Activated T-helper 1 cell treated with anti-CD3 and anti-CD28 coated beads, Interleukin-12 subunit alpha, Interleukin-12 subunit beta, Interleukin-2, Interleukin-4 antibody, amounts not matched to agents 30 ng/mL and 10 ng/mL and 1 ng/mL, durations not matched to agents 14 hours and 24 hours and 36 hours (primary cell): ENCODE measurements at regions of chr3 and their contacts with region 1.

Region 1: GRCh38 chr3:195129644-195130492 is 141.1 kb downstream of the XXYLT1 start:
- DNase-seq: no peak
- H3K4me3 Mint-ChIP-seq: peak overlapping the region; percentile 20
- H3K27ac Mint-ChIP-seq: peak overlapping the region; percentile 61
- H3K4me1 Mint-ChIP-seq: peaks cover 31% of the 10 kb centered on the region
- H3K27me3 Mint-ChIP-seq: no peaks in the 10 kb centered on the region

Region 2: GRCh38 chr3:195147649-195148095 is 17.8 kb after region 1 on chr3:
- intact Hi-C with region 1: loop called (anchors 1 kb)
- DNase-seq: peak; percentile 55
- H3K4me3 Mint-ChIP-seq: peak overlapping the region; percentile 82
- H3K27ac Mint-ChIP-seq: peak overlapping the region; percentile 22
- H3K4me1 Mint-ChIP-seq: peaks cover 43% of the 10 kb centered on the region
- H3K27me3 Mint-ChIP-seq: peaks cover 6% of the 10 kb centered on the region

Region 3: DNA sequence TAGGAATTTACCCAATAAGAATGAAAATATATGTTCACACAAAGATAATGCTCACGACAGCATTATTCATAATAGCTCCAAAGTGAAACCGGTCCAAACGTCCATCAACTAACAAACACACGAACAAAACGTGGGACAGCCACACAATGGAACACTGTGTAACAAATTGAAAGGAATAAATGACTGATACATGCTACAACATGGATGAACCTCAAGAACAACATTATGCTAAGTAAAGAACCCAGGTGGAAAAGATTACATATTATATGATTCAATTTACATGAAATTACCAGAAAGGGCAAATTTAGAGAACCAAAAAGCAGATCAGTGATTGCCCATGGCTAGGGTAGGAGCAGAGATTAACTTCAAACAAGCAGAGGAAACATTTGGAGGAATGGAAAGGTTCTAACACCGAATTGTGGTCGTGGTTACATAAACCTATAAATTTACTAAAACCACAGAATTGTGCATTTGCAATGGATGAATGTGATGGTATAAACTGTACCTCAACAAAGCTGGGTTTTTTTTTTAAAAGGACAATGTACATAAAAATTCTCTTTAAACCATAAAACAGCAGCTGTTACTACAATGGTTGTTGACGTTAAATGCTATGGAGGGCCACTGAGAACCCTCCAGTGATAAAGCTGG is 64.8 kb after region 1 on chr3:
- intact Hi-C with region 1: loop called (anchors 1 kb)
- DNase-seq: no peak
- H3K4me3 Mint-ChIP-seq: no peak overlapping the region
- H3K27ac Mint-ChIP-seq: peak overlapping the region; percentile 37
- H3K4me1 Mint-ChIP-seq: peaks cover 13% of the 10 kb centered on the region
- H3K27me3 Mint-ChIP-seq: peaks cover 6% of the 10 kb centered on the region

Region 4: DNA sequence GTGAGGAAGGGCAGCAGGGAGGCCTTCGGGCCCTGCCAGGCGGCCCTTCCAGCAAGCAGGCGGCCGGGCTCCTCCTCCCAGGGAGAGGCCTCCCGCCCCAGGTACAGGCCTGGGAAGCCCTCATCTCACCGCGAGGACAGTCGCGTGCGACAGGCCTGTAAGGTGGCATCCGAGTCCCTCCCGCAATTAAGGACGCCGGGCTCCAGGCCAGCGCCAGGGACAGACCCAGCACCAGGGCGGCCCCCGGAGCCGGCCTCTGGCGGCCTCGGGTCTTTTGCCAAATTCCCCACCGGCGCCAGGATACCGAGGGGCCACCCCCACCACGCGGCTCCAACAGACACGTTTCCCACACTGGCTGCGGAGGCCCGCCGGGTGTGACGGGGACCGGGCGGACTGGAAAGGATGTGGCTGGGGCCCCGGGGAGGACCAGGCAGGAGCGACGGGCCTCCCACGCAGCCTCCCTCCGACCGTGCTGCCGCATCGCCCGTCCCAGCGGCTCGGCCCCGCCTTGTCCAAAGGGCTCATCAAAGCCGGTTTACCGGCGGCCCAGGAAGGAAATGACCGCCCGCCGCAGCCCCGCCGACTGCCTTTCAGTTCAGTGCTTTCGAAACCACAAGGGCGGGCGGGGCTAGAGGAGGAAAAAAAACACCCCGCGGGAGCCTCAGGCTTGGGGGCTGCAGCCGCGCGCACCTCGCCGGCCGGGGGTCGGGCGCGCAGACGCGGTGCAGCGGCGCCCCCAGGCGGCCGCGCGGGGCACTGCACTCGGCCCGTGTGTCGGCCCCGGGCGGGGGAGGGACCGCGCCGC is 129.8 kb after region 1 on chr3:
- intact Hi-C with region 1: loop called (anchors 1 kb)
- DNase-seq: peak; percentile 76
- H3K4me3 Mint-ChIP-seq: peak overlapping the region; percentile 15
- H3K27ac Mint-ChIP-seq: no peak overlapping the region
- H3K4me1 Mint-ChIP-seq: peaks cover 24% of the 10 kb centered on the region
- H3K27me3 Mint-ChIP-seq: no peaks in the 10 kb centered on the region